Gastrocnemius medialis (tissue), 4 donors: ENCODE measurements at regions of chr10 and their contacts with region 1.

Region 1: GRCh38 chr10:119686439-119687191 is 35.4 kb downstream of the BAG3 start:
- DNase-seq: peak; percentile 55 to 63
- ATAC-seq: peak; percentile 59 to 75
- H3K4me3 ChIP-seq: peak overlapping the region in 1 of 4 donors; percentile 22
- H3K27ac ChIP-seq: peak overlapping the region; percentile 38 to 48 (median 44)
- H3K4me1 ChIP-seq: peaks cover 11 to 12% of the 10 kb centered on the region in 2 donors
- H3K27me3 ChIP-seq: no peaks in the 10 kb centered on the region
- CTCF ChIP-seq: peak; percentile 90 to 96 (median 93)
- POLR2A ChIP-seq: no peak

Region 2: GRCh38 chr10:119608316-119609155 is 78.1 kb before region 1 on chr10:
- in situ Hi-C with region 1: loop called in 1 of 4 experiments (anchors 10 kb)
- intact Hi-C with region 1: no loop called
- DNase-seq: peak; percentile 12 to 49
- ATAC-seq: peak; percentile 82 to 97
- H3K4me3 ChIP-seq: peak overlapping the region in 1 of 4 donors; percentile 12
- H3K27ac ChIP-seq: no peak overlapping the region
- H3K4me1 ChIP-seq: peaks cover 0 to 6% of the 10 kb centered on the region in 2 donors
- H3K27me3 ChIP-seq: no peaks in the 10 kb centered on the region
- CTCF ChIP-seq: peak; percentile 37 to 82 (median 64)
- POLR2A ChIP-seq: no peak

Region 3: DNA sequence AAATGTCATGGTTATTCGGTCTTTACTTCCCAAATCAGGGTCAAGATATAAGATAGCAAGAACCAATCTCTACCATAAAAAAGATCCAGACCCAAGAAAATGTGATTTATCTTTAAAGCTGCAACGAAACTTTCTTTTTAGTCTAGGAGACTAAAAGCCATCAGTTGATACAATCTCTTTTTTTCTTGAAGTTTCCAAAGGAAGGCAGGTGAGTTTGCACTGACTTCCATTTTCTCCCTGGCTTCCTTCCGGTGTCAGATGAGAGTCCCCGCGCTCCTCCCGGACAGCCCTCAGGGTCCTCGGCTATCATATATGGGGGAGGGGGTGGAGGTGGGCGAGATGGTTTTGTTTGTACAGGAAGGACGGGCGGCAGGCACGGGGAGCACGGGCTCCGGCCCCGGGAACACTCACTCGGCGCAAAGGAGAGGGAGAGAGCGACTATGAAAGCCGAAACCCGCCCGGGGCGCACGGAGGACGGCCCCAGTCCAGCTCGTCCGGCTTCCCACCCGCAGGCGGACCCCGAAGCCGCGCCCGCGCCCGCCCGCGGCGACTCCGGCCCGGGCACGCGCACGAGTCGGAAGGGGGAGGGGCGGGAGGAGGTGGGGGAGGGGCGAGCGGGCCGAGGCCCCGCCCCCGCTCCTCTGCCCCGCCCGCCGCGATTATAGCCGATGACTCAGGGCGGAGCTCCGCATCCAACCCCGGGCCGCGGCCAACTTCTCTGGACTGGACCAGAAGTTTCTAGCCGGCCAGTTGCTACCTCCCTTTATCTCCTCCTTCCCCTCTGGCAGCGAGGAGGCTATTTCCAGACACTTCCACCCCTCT is 35.7 kb before region 1 on chr10 and contains the start of gene BAG3:
- in situ Hi-C with region 1: no loop called
- intact Hi-C with region 1: loop called (anchors 1 kb)
- DNase-seq: peak; percentile 97 to 98
- ATAC-seq: peak; percentile 81 to 83
- H3K4me3 ChIP-seq: peak within 1 kb of the TSS; percentile 80 to 85 (median 81)
- H3K27ac ChIP-seq: peak within 1 kb of the TSS; percentile 91 to 99 (median 97)
- H3K4me1 ChIP-seq: peaks cover 20 to 27% of the 10 kb centered on the region in 2 donors
- H3K27me3 ChIP-seq: no peaks in the 10 kb centered on the region
- CTCF ChIP-seq: no peak
- POLR2A ChIP-seq: no peak
- total RNA-seq, gene BAG3: 337 to 626 (median 393) TPM

Region 4: DNA sequence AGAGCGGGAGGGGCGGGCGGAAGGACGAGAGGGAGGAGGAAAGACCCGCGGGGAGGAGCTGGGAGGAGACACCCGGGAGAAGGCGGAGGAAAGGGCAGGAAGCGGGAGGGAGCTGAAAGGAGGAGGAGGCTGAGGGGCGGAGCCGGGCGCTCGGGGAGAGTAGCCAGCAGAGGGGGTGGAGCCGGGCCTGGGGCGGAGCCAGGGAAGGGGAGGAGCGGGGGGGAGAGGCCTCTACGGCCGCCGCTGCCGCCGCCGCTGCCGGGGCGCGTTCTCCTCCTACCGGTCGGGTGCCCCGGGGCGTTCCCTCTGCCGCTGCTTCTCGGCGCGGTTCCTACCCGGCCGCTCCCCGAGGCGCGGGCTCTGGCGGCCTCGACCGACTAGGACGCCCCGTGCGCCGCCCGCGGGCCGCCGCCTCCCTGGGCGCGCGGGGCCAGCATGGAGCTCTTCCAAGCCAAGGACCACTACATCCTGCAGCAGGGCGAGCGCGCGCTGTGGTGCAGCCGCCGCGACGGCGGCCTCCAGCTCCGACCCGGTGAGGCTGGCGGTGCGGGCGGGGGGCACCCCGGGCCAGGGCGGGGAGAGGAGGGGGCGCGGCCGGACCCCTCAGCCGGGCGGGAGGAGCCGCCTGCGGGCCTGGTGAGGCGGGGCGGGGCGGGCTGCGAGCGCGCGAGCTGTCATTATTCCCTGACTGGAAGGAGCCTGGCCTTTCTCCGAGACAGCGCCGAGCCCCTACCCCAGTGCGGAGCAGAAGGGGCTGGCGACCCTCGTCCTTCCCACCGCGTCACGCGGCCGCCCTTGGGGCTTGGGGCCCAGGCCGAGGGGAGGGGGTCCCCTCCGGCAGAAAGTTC is 39.4 kb after region 1 on chr10 and contains the start of gene INPP5F:
- in situ Hi-C with region 1: no loop called
- intact Hi-C with region 1: loop called (anchors 1 kb)
- DNase-seq: peak; percentile 99
- ATAC-seq: peak; percentile 94 to 96
- H3K4me3 ChIP-seq: peak within 1 kb of the TSS; percentile 74 to 93 (median 82)
- H3K27ac ChIP-seq: peak within 1 kb of the TSS; percentile 92 to 96 (median 94)
- H3K4me1 ChIP-seq: peaks cover 18 to 26% of the 10 kb centered on the region in 2 donors
- H3K27me3 ChIP-seq: no peaks in the 10 kb centered on the region
- CTCF ChIP-seq: peak; percentile 28 to 56 (median 41)
- POLR2A ChIP-seq: peak; percentile 75 to 77
- total RNA-seq, gene INPP5F: 8.7 to 11.6 (median 10.5) TPM

Region 5: GRCh38 chr10:119859420-119860258 is 173.0 kb after region 1 on chr10:
- in situ Hi-C with region 1: loop called in 3 of 4 experiments (anchors 5 to 25 kb)
- intact Hi-C with region 1: loop called (anchors 1 kb)
- DNase-seq: no peak
- ATAC-seq: no peak
- H3K4me3 ChIP-seq: no peak overlapping the region
- H3K27ac ChIP-seq: no peak overlapping the region
- H3K4me1 ChIP-seq: peaks cover 7 to 10% of the 10 kb centered on the region in 2 donors
- H3K27me3 ChIP-seq: no peaks in the 10 kb centered on the region
- CTCF ChIP-seq: peak; percentile 41 to 71 (median 59)
- POLR2A ChIP-seq: no peak

Region 6: GRCh38 chr10:119872860-119873681 is 186.5 kb after region 1 on chr10:
- in situ Hi-C with region 1: loop called in 1 of 4 experiments (anchors 25 kb)
- intact Hi-C with region 1: loop called (anchors 5 kb)
- DNase-seq: peak; percentile 71 to 81
- ATAC-seq: peak; percentile 92 to 93
- H3K4me3 ChIP-seq: peak overlapping the region; percentile 85 to 96 (median 90)
- H3K27ac ChIP-seq: peak overlapping the region; percentile 89 to 97 (median 92)
- H3K4me1 ChIP-seq: peaks cover 17 to 28% of the 10 kb centered on the region in 2 donors
- H3K27me3 ChIP-seq: no peaks in the 10 kb centered on the region
- CTCF ChIP-seq: peak in 1 of 5 experiments; percentile 2
- POLR2A ChIP-seq: peak in 1 of 2 donors; percentile 42